ENCODE measurements at regions of chr12 and their contacts with region 1.

Region 1: DNA sequence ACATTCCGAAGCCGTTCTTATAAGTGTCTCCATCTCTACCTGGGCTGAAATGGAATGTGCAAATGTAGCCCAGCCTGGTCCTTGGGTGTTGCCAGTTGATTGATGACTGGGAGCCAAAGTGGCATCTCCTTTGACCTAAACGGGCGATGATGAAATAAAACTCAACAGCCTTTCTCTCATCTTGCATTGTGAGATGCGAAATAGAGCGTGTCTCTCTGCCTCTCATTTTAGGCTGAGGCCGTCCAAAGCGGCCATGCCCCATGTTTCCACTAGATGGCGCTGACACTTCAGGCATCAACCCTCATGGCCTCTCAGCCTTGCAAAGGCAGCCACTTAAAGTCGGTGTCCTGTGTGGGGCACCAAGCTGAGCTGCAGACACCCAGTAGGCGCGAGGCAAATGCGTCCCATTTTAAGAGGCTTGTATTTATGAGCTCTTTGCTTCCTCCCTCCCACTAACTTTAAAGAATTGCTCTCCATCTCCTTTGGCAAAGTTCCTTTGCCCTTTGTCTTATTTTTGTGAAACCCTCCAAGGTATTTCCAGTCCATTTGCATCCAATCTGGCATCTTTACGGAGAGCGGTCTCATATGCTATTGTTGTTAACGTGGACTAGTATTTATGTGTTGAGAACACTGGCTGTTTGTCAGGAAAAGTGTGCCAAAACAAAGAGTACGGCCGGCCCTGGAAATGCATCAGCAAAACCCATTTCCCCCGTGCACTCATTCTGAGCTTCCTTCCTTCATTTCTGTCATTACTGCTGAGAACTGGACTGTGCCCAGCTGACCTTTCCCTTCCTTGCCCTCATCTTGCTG is 25.0 kb downstream of the GPRC5A start:
- DNase-seq: no peak
- ATAC-seq: peak; percentile 99
- H3K4me3 ChIP-seq: no peak overlapping the region
- H3K27ac ChIP-seq: no peak overlapping the region
- H3K4me1 ChIP-seq: no peaks in the 10 kb centered on the region
- H3K27me3 ChIP-seq: peaks cover 2 to 3% of the 10 kb centered on the region in 2 experiments; a peak in 2 of 4 replicates
- CTCF ChIP-seq: peak; percentile 96 to 99 (median 99); a peak in 5 of 6 replicates
- EP300 ChIP-seq: no peak
- POLR2A ChIP-seq: no peak
- RAD21 ChIP-seq: peak; percentile 98

Region 2: GRCh38 chr12:12975322-12976077 is 59.2 kb after region 1 on chr12:
- CTCF ChIA-PET with region 1: interaction called, 20 read pairs
- POLR2A ChIA-PET with region 1: no interaction called
- RAD21 ChIA-PET with region 1: interaction called, 6 read pairs
- SMC1A ChIA-PET with region 1: interaction called, 6 read pairs
- in situ Hi-C with region 1: no loop called
- intact Hi-C with region 1: no loop called
- DNase-seq: no peak
- ATAC-seq: peak; percentile 71
- H3K4me3 ChIP-seq: no peak overlapping the region
- H3K27ac ChIP-seq: no peak overlapping the region
- H3K4me1 ChIP-seq: no peaks in the 10 kb centered on the region
- H3K27me3 ChIP-seq: no peaks in the 10 kb centered on the region
- CTCF ChIP-seq: peak; percentile 23 to 53 (median 48); a peak in 4 of 6 replicates
- EP300 ChIP-seq: no peak
- POLR2A ChIP-seq: no peak
- RAD21 ChIP-seq: peak; percentile 38

Region 3: GRCh38 chr12:12983420-12984035 is 67.2 kb after region 1 on chr12:
- CTCF ChIA-PET with region 1: interaction called, 19 read pairs
- POLR2A ChIA-PET with region 1: no interaction called
- RAD21 ChIA-PET with region 1: interaction called, 6 read pairs
- SMC1A ChIA-PET with region 1: interaction called, 4 read pairs
- in situ Hi-C with region 1: no loop called
- intact Hi-C with region 1: loop called (anchors 2 kb)
- DNase-seq: no peak
- ATAC-seq: peak; percentile 71
- H3K4me3 ChIP-seq: no peak overlapping the region
- H3K27ac ChIP-seq: no peak overlapping the region
- H3K4me1 ChIP-seq: no peaks in the 10 kb centered on the region
- H3K27me3 ChIP-seq: peaks cover 0 to 3% of the 10 kb centered on the region in 2 experiments; a peak in 2 of 4 replicates
- CTCF ChIP-seq: peak; percentile 38 to 41 (median 41); a peak in 5 of 6 replicates
- EP300 ChIP-seq: no peak
- POLR2A ChIP-seq: no peak
- RAD21 ChIP-seq: peak; percentile 57

Region 4: GRCh38 chr12:13233830-13234641 is 317.7 kb after region 1 on chr12:
- CTCF ChIA-PET with region 1: interaction called, 4 read pairs
- POLR2A ChIA-PET with region 1: no interaction called
- RAD21 ChIA-PET with region 1: no interaction called
- SMC1A ChIA-PET with region 1: no interaction called
- in situ Hi-C with region 1: no loop called
- intact Hi-C with region 1: loop called (anchors 1 kb)
- DNase-seq: no peak
- ATAC-seq: peak; percentile 70
- H3K4me3 ChIP-seq: no peak overlapping the region
- H3K27ac ChIP-seq: no peak overlapping the region
- H3K4me1 ChIP-seq: no peaks in the 10 kb centered on the region
- H3K27me3 ChIP-seq: no peaks in the 10 kb centered on the region
- CTCF ChIP-seq: peak; percentile 56 to 78 (median 75)
- EP300 ChIP-seq: no peak
- POLR2A ChIP-seq: no peak
- RAD21 ChIP-seq: peak; percentile 63

Region 5: GRCh38 chr12:13496111-13496510 is 579.8 kb after region 1 on chr12:
- CTCF ChIA-PET with region 1: no interaction called
- POLR2A ChIA-PET with region 1: no interaction called
- RAD21 ChIA-PET with region 1: no interaction called
- SMC1A ChIA-PET with region 1: no interaction called
- in situ Hi-C with region 1: no loop called
- intact Hi-C with region 1: no loop called
- DNase-seq: no peak
- ATAC-seq: no peak
- H3K4me3 ChIP-seq: no peak overlapping the region
- H3K27ac ChIP-seq: no peak overlapping the region
- H3K4me1 ChIP-seq: no peaks in the 10 kb centered on the region
- H3K27me3 ChIP-seq: no peaks in the 10 kb centered on the region; a peak in 1 of 4 replicates
- CTCF ChIP-seq: no peak
- EP300 ChIP-seq: no peak
- POLR2A ChIP-seq: no peak
- RAD21 ChIP-seq: no peak